CD4-positive, alpha-beta T cell (primary cell): ENCODE measurements at regions of chr1 and their contacts with region 1.

Region 1: GRCh38 chr1:204506961-204507387 is 9.2 kb upstream of the MDM4 start:
- DNase-seq: peak; percentile 72 to 97 (median 82)
- ATAC-seq: peak; percentile 75
- H3K4me3 ChIP-seq: peak overlapping the region; percentile 61
- H3K4me3 Mint-ChIP-seq: peak overlapping the region; percentile 91
- H3K27ac ChIP-seq: peak overlapping the region; percentile 86 to 93
- H3K27ac Mint-ChIP-seq: peak overlapping the region; percentile 99
- H3K4me1 ChIP-seq: peaks cover 22% of the 10 kb centered on the region
- H3K4me1 Mint-ChIP-seq: peaks cover 53% of the 10 kb centered on the region
- H3K27me3 ChIP-seq: no peaks in the 10 kb centered on the region
- H3K27me3 Mint-ChIP-seq: peaks cover 15% of the 10 kb centered on the region
- CTCF ChIP-seq: no peak

Region 2: GRCh38 chr1:204162231-204163074 is 344.5 kb before region 1 on chr1:
- CTCF ChIA-PET with region 1: no interaction called
- POLR2A ChIA-PET with region 1: no interaction called
- intact Hi-C with region 1: loop called (anchors 1 to 5 kb)
- DNase-seq: peak; percentile 60 to 86 (median 72)
- ATAC-seq: peak; percentile 98
- H3K4me3 ChIP-seq: no peak overlapping the region
- H3K4me3 Mint-ChIP-seq: no peak overlapping the region
- H3K27ac ChIP-seq: no peak overlapping the region
- H3K27ac Mint-ChIP-seq: no peak overlapping the region
- H3K4me1 ChIP-seq: no peaks in the 10 kb centered on the region
- H3K4me1 Mint-ChIP-seq: no peaks in the 10 kb centered on the region
- H3K27me3 ChIP-seq: no peaks in the 10 kb centered on the region
- H3K27me3 Mint-ChIP-seq: peaks cover 18% of the 10 kb centered on the region
- CTCF ChIP-seq: peak; percentile 99

Region 3: GRCh38 chr1:204426029-204426436 is 80.9 kb before region 1 on chr1:
- CTCF ChIA-PET with region 1: interaction called, 34 read pairs
- POLR2A ChIA-PET with region 1: interaction called, 14 read pairs
- intact Hi-C with region 1: loop called in 1 of 2 experiments (anchors 1 kb)
- DNase-seq: no peak
- ATAC-seq: no peak
- H3K4me3 ChIP-seq: no peak overlapping the region
- H3K4me3 Mint-ChIP-seq: no peak overlapping the region
- H3K27ac ChIP-seq: no peak overlapping the region
- H3K27ac Mint-ChIP-seq: no peak overlapping the region
- H3K4me1 ChIP-seq: no peaks in the 10 kb centered on the region
- H3K4me1 Mint-ChIP-seq: no peaks in the 10 kb centered on the region
- H3K27me3 ChIP-seq: no peaks in the 10 kb centered on the region
- H3K27me3 Mint-ChIP-seq: no peaks in the 10 kb centered on the region
- CTCF ChIP-seq: no peak

Region 4: GRCh38 chr1:204446370-204447111 is 60.4 kb before region 1 on chr1:
- CTCF ChIA-PET with region 1: interaction called, 218 read pairs
- POLR2A ChIA-PET with region 1: interaction called, 14 read pairs
- intact Hi-C with region 1: loop called (anchors 1 kb)
- DNase-seq: peak; percentile 69 to 89 (median 74)
- ATAC-seq: peak; percentile 98
- H3K4me3 ChIP-seq: no peak overlapping the region
- H3K4me3 Mint-ChIP-seq: no peak overlapping the region
- H3K27ac ChIP-seq: no peak overlapping the region
- H3K27ac Mint-ChIP-seq: peak overlapping the region; percentile 81
- H3K4me1 ChIP-seq: peaks cover 38% of the 10 kb centered on the region
- H3K4me1 Mint-ChIP-seq: peaks cover 22% of the 10 kb centered on the region
- H3K27me3 ChIP-seq: no peaks in the 10 kb centered on the region
- H3K27me3 Mint-ChIP-seq: no peaks in the 10 kb centered on the region
- CTCF ChIP-seq: peak; percentile 74

Region 5: DNA sequence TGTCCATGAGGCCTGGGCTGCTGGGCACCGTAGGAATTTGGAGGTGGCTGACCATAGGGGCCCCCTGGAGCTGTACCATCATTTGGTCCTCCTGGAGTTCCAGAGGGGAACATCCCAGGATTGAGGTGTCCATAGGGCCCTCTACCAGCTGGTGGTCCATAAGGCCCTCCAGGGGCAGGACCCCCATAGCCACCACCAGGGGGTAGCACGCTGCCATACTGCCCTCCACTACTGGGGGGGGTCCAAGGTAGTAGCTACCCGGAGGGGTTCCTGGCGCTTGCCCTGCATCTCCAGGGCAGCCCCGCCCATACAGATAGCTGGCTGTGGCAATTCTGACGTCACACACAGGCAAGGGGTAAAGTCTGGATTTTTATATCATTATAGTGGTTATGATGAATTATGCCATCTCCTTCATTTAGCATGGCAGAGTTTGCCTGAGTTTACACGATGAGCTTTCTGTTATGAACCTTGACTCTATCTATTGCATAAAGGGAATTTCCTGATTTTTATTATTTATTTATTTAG is 22.5 kb after region 1 on chr1:
- CTCF ChIA-PET with region 1: interaction called, 12 read pairs
- POLR2A ChIA-PET with region 1: interaction called, 50 read pairs
- intact Hi-C with region 1: no loop called
- DNase-seq: no peak
- ATAC-seq: no peak
- H3K4me3 ChIP-seq: no peak overlapping the region
- H3K4me3 Mint-ChIP-seq: no peak overlapping the region
- H3K27ac ChIP-seq: no peak overlapping the region
- H3K27ac Mint-ChIP-seq: peak overlapping the region; percentile 17
- H3K4me1 ChIP-seq: peaks cover 16% of the 10 kb centered on the region
- H3K4me1 Mint-ChIP-seq: peaks cover 47% of the 10 kb centered on the region
- H3K27me3 ChIP-seq: no peaks in the 10 kb centered on the region
- H3K27me3 Mint-ChIP-seq: no peaks in the 10 kb centered on the region
- CTCF ChIP-seq: no peak

Region 6: GRCh38 chr1:204556458-204557052 is 49.6 kb after region 1 on chr1:
- CTCF ChIA-PET with region 1: no interaction called
- POLR2A ChIA-PET with region 1: interaction called, 11 read pairs
- intact Hi-C with region 1: no loop called
- DNase-seq: no peak
- ATAC-seq: peak; percentile 67
- H3K4me3 ChIP-seq: no peak overlapping the region
- H3K4me3 Mint-ChIP-seq: peak overlapping the region; percentile 49
- H3K27ac ChIP-seq: peak overlapping the region in 1 of 2 donors; percentile 11
- H3K27ac Mint-ChIP-seq: peak overlapping the region; percentile 84
- H3K4me1 ChIP-seq: peaks cover 14% of the 10 kb centered on the region
- H3K4me1 Mint-ChIP-seq: peaks cover 58% of the 10 kb centered on the region
- H3K27me3 ChIP-seq: no peaks in the 10 kb centered on the region
- H3K27me3 Mint-ChIP-seq: no peaks in the 10 kb centered on the region
- CTCF ChIP-seq: no peak

Region 7: GRCh38 chr1:204670152-204670927 is 163.4 kb after region 1 on chr1:
- CTCF ChIA-PET with region 1: no interaction called
- POLR2A ChIA-PET with region 1: no interaction called
- intact Hi-C with region 1: no loop called
- DNase-seq: no peak
- ATAC-seq: no peak
- H3K4me3 ChIP-seq: no peak overlapping the region
- H3K4me3 Mint-ChIP-seq: no peak overlapping the region
- H3K27ac ChIP-seq: no peak overlapping the region
- H3K27ac Mint-ChIP-seq: no peak overlapping the region
- H3K4me1 ChIP-seq: no peaks in the 10 kb centered on the region
- H3K4me1 Mint-ChIP-seq: no peaks in the 10 kb centered on the region
- H3K27me3 ChIP-seq: no peaks in the 10 kb centered on the region
- H3K27me3 Mint-ChIP-seq: no peaks in the 10 kb centered on the region
- CTCF ChIP-seq: no peak

Region 8: DNA sequence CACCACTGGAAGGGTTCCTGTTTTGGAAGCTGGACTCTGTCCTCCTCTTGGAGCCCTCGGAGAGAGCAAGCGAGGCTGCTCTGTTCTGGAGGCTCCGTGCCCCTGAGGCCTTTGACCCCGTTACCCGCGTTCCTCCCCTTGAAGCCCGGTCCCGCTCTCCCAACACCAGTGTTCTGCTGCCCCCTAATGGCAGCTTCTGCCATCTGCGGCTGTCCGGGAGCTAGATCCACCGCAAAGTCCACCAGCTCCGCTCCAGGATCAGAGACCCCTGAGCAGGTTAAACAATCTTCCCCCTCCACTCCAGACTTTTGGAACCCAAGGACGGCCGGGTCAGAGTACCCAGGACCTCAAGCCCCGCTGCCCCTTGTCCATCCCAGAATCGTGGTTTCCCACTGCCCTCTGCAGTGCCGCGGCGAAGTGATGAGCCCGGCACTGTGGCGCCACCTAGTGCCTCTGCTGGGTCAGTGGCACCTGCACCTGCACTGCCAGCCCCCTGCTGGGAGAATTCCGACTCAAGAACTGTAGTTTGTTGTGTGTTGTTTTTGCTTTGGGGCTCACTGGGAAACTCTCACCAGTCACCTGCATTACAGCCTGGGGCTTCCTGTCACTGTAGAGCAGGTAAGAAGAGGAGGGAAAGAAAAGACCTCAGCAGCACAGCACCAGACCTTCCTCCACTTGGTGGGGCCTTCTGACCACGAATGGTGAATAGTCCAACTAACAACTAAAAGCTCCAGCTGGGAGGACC is 300.1 kb after region 1 on chr1:
- CTCF ChIA-PET with region 1: interaction called, 5 read pairs
- POLR2A ChIA-PET with region 1: no interaction called
- intact Hi-C with region 1: loop called in 1 of 2 experiments (anchors 10 kb)
- DNase-seq: peak; percentile 68 to 91 (median 77)
- ATAC-seq: peak; percentile 95
- H3K4me3 ChIP-seq: peak overlapping the region; percentile 59
- H3K4me3 Mint-ChIP-seq: peak overlapping the region; percentile 92
- H3K27ac ChIP-seq: no peak overlapping the region
- H3K27ac Mint-ChIP-seq: no peak overlapping the region
- H3K4me1 ChIP-seq: peaks cover 20% of the 10 kb centered on the region
- H3K4me1 Mint-ChIP-seq: peaks cover 6% of the 10 kb centered on the region
- H3K27me3 ChIP-seq: no peaks in the 10 kb centered on the region
- H3K27me3 Mint-ChIP-seq: no peaks in the 10 kb centered on the region
- CTCF ChIP-seq: peak; percentile 100